ENCODE measurements at regions of chr22 and their contacts with region 1.

Region 1: GRCh38 chr22:44625981-44626687 is 75.9 kb upstream of the PRR5 start:
- DNase-seq: peak; percentile 71

Region 2: GRCh38 chr22:43412808-43413795 is 1213.0 kb before region 1 on chr22:
- in situ Hi-C with region 1: loop called (anchors 25 kb)
- DNase-seq: no peak

Region 3: DNA sequence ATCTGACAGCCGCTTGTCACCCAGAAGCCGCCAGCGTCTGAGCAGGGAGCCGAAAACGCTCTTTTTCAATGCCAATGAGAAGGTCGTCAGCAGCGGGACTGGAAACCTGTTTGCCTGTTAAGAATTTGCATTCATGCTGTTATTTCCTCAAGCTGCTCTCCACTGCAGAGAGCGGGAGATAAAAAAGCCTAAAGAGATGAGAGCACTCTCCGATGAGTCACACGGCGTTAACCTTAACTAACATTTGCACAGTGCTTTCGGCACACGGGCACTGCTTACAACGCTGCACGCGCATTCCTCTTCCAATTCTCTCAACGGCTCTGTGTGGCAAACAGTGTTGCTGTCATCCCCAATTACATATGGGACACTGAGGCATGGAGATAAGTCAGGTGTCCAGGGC is 88.1 kb before region 1 on chr22:
- in situ Hi-C with region 1: no loop called
- DNase-seq: no peak

Region 4: DNA sequence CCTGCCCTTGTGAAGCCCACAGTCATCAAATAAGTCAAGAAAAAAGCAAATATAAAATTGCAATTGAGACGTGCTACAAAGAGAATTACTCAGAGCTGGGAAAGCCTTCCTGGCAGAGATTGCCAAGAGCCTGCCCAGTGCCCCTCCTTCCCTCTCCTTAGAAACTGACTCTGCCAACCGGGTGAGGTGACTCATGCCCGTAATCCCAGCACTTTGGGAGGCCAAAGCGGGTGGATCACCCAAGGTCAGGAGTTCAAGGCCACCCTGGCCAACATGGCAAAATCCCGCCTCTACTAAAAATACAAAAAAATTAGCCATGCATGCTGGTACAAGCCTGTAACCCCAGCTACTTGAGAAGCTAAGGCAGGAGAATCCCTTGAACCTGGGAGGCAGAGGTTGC is 52.1 kb before region 1 on chr22:
- in situ Hi-C with region 1: no loop called
- DNase-seq: no peak

Region 5: DNA sequence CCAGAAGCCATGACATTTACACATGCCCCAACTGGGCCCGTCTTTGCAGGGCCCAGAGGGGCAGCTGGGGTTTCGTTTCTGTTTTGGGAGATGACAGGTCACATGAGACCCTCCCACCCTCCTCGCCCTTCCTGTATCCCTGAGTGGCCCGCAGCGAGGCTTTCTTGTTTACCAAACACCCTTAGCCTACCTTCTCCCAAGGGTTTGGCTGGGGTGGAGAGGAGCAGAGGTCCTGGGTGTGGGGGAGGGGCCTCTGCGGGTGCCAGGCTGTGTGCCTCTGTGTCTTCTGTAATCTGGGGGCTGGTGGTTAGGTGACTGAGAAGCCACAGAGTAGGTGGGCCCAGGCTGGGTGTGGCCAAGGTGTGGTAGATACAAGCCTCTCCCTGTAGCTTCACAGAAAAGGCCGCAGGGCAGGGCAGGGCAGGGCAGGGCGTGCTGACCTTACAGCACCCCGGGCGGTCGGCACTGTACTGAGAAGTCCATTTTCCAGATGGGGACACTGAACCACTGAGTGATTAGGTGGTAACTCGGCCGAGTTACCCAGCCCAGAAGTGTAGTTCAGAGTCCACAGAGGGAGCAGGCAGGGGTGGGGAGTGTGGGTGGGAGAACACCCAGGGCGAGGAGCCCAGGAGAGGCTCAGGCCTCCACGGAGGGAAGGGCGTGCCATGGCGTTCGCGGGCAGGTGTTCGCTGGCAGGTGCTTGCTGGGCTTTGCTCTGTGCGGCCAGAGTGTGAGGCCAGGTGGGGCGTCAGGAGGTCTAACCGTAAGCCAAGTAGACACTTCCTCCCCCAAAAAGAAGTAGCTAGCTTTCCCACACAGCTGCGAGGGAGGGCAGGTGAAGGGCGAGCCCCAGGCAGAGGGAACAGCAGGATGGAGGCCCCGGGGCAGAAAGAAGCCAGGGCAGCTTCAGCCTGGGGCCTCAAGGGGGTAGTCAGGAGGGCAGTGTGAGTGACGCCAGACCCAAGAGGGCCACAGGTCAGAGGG is 84.6 kb after region 1 on chr22:
- in situ Hi-C with region 1: no loop called
- DNase-seq: no peak

Measured in KBM-7 (cell line).